ENCODE measurements at regions of chr2 and their contacts with region 1.

Region 1: DNA sequence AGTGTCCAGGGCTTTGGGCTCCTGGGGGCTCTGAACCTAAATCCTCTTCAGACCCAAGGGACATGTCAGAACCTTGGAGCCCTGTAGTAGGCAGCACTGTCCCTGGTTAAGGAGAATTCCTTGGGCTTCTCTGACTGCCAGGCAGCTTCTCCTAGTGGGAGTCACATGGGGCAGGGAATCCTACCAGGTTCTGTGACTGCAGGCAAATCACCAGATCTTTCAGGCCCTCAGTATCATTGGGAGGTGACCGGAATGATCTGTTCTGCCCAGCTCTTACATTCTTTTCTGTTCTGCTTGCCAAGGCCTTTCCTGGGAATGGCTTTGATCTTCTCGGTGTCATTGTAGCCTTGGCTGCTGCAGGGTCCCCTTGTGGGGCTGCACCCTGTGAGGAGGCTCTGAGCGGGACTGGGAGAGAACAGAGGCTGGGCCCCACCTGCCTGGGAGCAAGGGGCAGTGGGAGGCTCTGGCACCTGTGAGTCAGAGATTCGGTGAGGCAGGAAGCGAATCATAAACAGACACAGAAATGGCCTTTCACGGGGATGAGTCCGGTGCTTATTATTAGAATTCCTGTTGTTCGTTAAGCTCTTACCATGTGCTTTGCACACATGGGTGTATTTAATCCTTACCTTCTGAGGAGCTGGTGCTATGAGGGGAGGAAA is 14.1 kb downstream of the CEP68 start:
- DNase-seq: no peak
- ATAC-seq: no peak
- H3K4me3 ChIP-seq: no peak overlapping the region
- H3K4me3 Mint-ChIP-seq: no peak overlapping the region
- H3K27ac ChIP-seq: no peak overlapping the region
- H3K27ac Mint-ChIP-seq: peak overlapping the region; percentile 78
- H3K4me1 ChIP-seq: peaks cover 20% of the 10 kb centered on the region
- H3K4me1 Mint-ChIP-seq: peaks cover 23% of the 10 kb centered on the region
- H3K27me3 ChIP-seq: no peaks in the 10 kb centered on the region
- H3K27me3 Mint-ChIP-seq: no peaks in the 10 kb centered on the region
- CTCF ChIP-seq: no peak

Region 2: GRCh38 chr2:65116645-65117044 is 46.3 kb after region 1 on chr2:
- CTCF ChIA-PET with region 1: interaction called, 5 read pairs
- POLR2A ChIA-PET with region 1: interaction called, 3 read pairs
- intact Hi-C with region 1: loop called in 1 of 2 experiments (anchors 1 kb)
- DNase-seq: no peak
- ATAC-seq: no peak
- H3K4me3 ChIP-seq: no peak overlapping the region
- H3K4me3 Mint-ChIP-seq: no peak overlapping the region
- H3K27ac ChIP-seq: no peak overlapping the region
- H3K27ac Mint-ChIP-seq: no peak overlapping the region
- H3K4me1 ChIP-seq: peaks cover 43% of the 10 kb centered on the region
- H3K4me1 Mint-ChIP-seq: peaks cover 67% of the 10 kb centered on the region
- H3K27me3 ChIP-seq: no peaks in the 10 kb centered on the region
- H3K27me3 Mint-ChIP-seq: no peaks in the 10 kb centered on the region
- CTCF ChIP-seq: no peak

Region 3: DNA sequence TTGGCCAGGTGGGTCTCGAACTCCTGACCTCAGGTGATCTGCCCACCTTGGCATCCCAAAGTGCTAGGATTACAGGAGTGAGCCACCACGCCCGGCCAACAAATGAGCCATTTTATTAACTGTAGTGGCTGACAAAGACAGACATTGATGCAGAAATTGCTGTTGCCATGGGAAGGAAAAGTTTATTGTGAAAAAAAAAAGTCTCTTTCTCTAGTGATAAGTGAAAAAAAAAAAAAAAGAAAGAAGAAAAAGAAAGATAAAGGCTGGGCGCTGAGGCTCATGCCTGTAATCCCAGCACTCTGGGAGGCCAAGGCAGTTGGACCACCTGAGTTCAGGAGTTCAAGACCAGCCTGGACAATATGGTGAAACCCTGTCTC is 99.4 kb after region 1 on chr2:
- CTCF ChIA-PET with region 1: interaction called, 29 read pairs
- POLR2A ChIA-PET with region 1: no interaction called
- intact Hi-C with region 1: no loop called
- DNase-seq: no peak
- ATAC-seq: no peak
- H3K4me3 ChIP-seq: no peak overlapping the region
- H3K4me3 Mint-ChIP-seq: no peak overlapping the region
- H3K27ac ChIP-seq: no peak overlapping the region
- H3K27ac Mint-ChIP-seq: no peak overlapping the region
- H3K4me1 ChIP-seq: no peaks in the 10 kb centered on the region
- H3K4me1 Mint-ChIP-seq: peaks cover 2% of the 10 kb centered on the region
- H3K27me3 ChIP-seq: no peaks in the 10 kb centered on the region
- H3K27me3 Mint-ChIP-seq: no peaks in the 10 kb centered on the region
- CTCF ChIP-seq: no peak